ENCODE measurements at regions of chr16 and their contacts with region 1.

Region 1: GRCh38 chr16:11205754-11206581 is 50.0 kb downstream of the SOCS1 start:
- DNase-seq: peak; percentile 56
- H3K4me3 Mint-ChIP-seq: no peak overlapping the region
- H3K27ac Mint-ChIP-seq: peak overlapping the region; percentile 87
- H3K4me1 Mint-ChIP-seq: peaks cover 28% of the 10 kb centered on the region
- H3K27me3 Mint-ChIP-seq: no peaks in the 10 kb centered on the region

Region 2: DNA sequence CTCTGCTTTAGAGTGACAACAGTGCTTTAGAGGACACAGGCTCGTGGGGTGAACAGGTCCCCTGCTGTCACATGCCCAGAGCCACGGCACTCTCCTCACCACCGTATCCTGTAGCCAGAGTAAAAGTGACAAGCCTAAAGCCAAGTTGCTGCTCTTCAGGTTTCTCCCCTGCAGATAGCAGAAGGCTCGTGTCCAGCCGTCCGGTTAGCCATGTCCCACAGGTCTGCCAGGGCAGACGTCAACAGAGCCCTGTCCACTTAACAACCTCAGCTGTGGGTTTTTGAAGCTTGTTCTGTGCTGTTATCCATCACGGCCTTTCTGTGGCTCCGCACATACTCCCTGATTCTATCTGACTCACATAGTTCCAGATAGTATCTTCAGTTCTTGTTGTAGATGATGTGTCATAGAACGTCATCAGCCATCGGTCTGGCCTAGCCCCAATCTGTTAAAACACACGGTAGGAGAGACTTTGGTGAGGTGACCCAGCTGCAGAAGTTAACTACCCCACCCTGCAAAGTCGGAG is 50.6 kb before region 1 on chr16:
- CTCF ChIA-PET with region 1: no interaction called
- intact Hi-C with region 1: no loop called
- DNase-seq: no peak
- H3K4me3 Mint-ChIP-seq: no peak overlapping the region
- H3K27ac Mint-ChIP-seq: no peak overlapping the region
- H3K4me1 Mint-ChIP-seq: peaks cover 5% of the 10 kb centered on the region
- H3K27me3 Mint-ChIP-seq: no peaks in the 10 kb centered on the region

Region 3: GRCh38 chr16:11218604-11218962 is 12.6 kb after region 1 on chr16:
- CTCF ChIA-PET with region 1: interaction called, 15 read pairs
- intact Hi-C with region 1: no loop called
- DNase-seq: no peak
- H3K4me3 Mint-ChIP-seq: no peak overlapping the region
- H3K27ac Mint-ChIP-seq: no peak overlapping the region
- H3K4me1 Mint-ChIP-seq: peaks cover 10% of the 10 kb centered on the region
- H3K27me3 Mint-ChIP-seq: no peaks in the 10 kb centered on the region

Measured in activated naive CD4-positive, alpha-beta T cell treated with anti-CD3 and anti-CD28 coated beads for 36 hours (primary cell).